H1 (cell line): ENCODE measurements at regions of chr1 and their contacts with region 1.

Region 1: DNA sequence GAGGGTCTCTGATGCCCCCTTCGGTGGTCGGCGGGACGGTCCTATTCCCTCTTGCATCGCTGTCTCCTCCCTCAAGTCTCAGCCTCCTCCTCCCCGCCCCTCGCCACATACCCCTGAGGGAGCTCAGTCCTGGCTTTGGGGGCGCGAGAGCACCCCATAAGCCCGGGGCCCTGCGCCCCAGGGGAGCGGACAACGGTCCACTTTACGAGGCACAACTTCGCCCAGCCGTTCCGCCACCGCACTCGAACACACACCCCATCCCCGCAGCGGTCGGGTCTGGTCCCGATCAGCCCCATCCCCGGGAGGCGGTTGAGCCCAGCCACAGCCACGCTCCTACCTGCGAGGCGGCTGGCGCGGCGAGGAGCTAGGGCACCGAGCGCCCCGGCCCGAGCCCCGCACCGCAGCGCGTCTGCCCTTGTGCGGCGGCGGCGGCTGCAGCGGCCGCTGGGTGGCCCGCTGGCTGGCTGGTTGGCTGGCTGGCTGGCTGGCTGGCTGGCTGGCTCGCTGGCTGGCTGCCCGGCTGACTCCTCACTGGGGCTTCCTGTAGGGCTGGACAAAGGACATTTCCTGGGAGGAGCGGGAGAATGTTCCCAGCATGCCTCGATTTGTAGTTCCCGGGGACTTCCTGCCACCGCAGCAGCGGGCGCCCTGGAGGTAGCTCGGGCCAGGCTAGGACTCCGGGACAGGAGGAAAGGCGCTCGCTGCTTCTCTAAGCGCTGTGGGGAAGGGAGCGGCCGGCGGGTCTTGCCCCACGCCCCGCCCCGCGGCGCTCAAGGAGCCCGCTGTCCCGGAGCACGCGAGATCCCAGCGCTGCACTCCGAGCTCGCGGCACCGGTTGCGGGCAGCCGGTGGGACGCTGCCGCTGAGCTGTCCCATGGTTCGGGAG is at the start of gene ZNF697:
- DNase-seq: peak; percentile 77 to 88
- H3K4me3 ChIP-seq: peak within 1 kb of the TSS; percentile 67 to 88 (median 81)
- H3K27ac ChIP-seq: peak within 1 kb of the TSS; percentile 80; the same call in 1 of the 2 replicates
- H3K4me1 ChIP-seq: peaks cover 0 to 16% (median 11%) of the 10 kb centered on the region in 4 experiments; a peak in 6 of 7 replicates
- H3K27me3 ChIP-seq: no peaks in the 10 kb centered on the region; a peak in 1 of 7 replicates
- CTCF ChIP-seq: peak; percentile 55 to 82 (median 73)
- EP300 ChIP-seq: no peak
- POLR2A ChIP-seq: peak; percentile 3 to 64; a peak in 2 of 3 replicates
- RAD21 ChIP-seq: peak; percentile 61 to 67; a peak in 3 of 4 replicates
- total RNA-seq, gene ZNF697: 17.9 and 18.3 TPM in 2 replicates

Region 2: GRCh38 chr1:119367427-119368124 is 280.4 kb before region 1 on chr1:
- CTCF ChIA-PET with region 1: no interaction called
- POLR2A ChIA-PET with region 1: no interaction called
- DNase-seq: no peak
- H3K4me3 ChIP-seq: no peak overlapping the region
- H3K27ac ChIP-seq: no peak overlapping the region
- H3K4me1 ChIP-seq: peaks cover 0 to 3% (median 2%) of the 10 kb centered on the region in 4 experiments; a peak in 3 of 7 replicates
- H3K27me3 ChIP-seq: no peaks in the 10 kb centered on the region; a peak in 1 of 7 replicates
- CTCF ChIP-seq: peak in 2 of 3 experiments; percentile 83 to 96; a peak in 3 of 4 replicates
- EP300 ChIP-seq: no peak
- POLR2A ChIP-seq: no peak
- RAD21 ChIP-seq: peak; percentile 100

Region 3: GRCh38 chr1:119623678-119624077 is 24.3 kb before region 1 on chr1:
- CTCF ChIA-PET with region 1: interaction called, 786 read pairs
- POLR2A ChIA-PET with region 1: interaction called, 49 read pairs
- DNase-seq: no peak
- H3K4me3 ChIP-seq: no peak overlapping the region
- H3K27ac ChIP-seq: no peak overlapping the region
- H3K4me1 ChIP-seq: peaks cover 0 to 9% (median 1%) of the 10 kb centered on the region in 4 experiments; a peak in 3 of 7 replicates
- H3K27me3 ChIP-seq: no peaks in the 10 kb centered on the region
- CTCF ChIP-seq: no peak
- EP300 ChIP-seq: no peak
- POLR2A ChIP-seq: no peak
- RAD21 ChIP-seq: no peak

Region 4: DNA sequence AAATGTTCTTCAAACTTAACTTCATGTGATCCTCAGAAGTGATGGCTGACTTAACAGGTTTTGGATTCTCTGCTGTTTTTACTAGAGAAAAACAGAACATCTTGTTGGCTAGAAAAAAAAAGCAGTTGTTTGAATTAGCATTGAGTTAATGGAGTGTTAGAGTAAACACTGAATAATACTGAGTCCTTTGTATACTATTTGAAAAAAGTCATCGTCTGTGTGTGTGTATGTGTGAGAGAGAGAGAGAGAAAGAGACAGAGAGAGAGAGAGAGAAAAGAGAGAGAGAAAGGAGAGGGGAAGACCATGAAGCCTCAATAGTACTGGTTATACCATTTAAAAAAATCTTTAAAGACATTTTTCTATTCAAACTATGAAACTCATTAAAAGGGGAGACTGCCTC is 10.3 kb before region 1 on chr1:
- CTCF ChIA-PET with region 1: interaction called, 786 read pairs
- POLR2A ChIA-PET with region 1: interaction called, 49 read pairs
- DNase-seq: no peak
- H3K4me3 ChIP-seq: no peak overlapping the region
- H3K27ac ChIP-seq: no peak overlapping the region
- H3K4me1 ChIP-seq: peaks cover 0 to 7% (median 2%) of the 10 kb centered on the region in 4 experiments; a peak in 2 of 7 replicates
- H3K27me3 ChIP-seq: no peaks in the 10 kb centered on the region
- CTCF ChIP-seq: no peak
- EP300 ChIP-seq: no peak
- POLR2A ChIP-seq: no peak
- RAD21 ChIP-seq: no peak

Region 5: GRCh38 chr1:119667173-119667572 is 19.2 kb after region 1 on chr1:
- CTCF ChIA-PET with region 1: interaction called, 168 read pairs
- POLR2A ChIA-PET with region 1: interaction called, 113 read pairs
- DNase-seq: no peak
- H3K4me3 ChIP-seq: no peak overlapping the region
- H3K27ac ChIP-seq: no peak overlapping the region
- H3K4me1 ChIP-seq: peaks cover 0 to 1% (median 0%) of the 10 kb centered on the region in 4 experiments; a peak in 1 of 7 replicates
- H3K27me3 ChIP-seq: no peaks in the 10 kb centered on the region
- CTCF ChIP-seq: no peak
- EP300 ChIP-seq: no peak
- POLR2A ChIP-seq: no peak
- RAD21 ChIP-seq: no peak

Region 6: GRCh38 chr1:119711804-119712341 is 63.9 kb after region 1 on chr1 and contains the start of gene PHGDH:
- CTCF ChIA-PET with region 1: interaction called, 6 read pairs
- POLR2A ChIA-PET with region 1: interaction called, 42 read pairs
- DNase-seq: peak in 1 of 2 experiments; percentile 83
- H3K4me3 ChIP-seq: peak within 1 kb of the TSS; percentile 85 to 99 (median 99)
- H3K27ac ChIP-seq: peak within 1 kb of the TSS; percentile 89
- H3K4me1 ChIP-seq: peaks cover 14 to 32% (median 20%) of the 10 kb centered on the region in 4 experiments
- H3K27me3 ChIP-seq: no peaks in the 10 kb centered on the region
- CTCF ChIP-seq: no peak
- EP300 ChIP-seq: no peak
- POLR2A ChIP-seq: peak; percentile 88 to 99
- RAD21 ChIP-seq: no peak
- total RNA-seq, gene PHGDH: 674 and 687 TPM in 2 replicates